CD4-positive, alpha-beta T cell (primary cell): ENCODE measurements at regions of chr11 and their contacts with region 1.

Region 1: GRCh38 chr11:64846998-64847666 is 2.7 kb upstream of the CDC42BPG start:
- DNase-seq: peak; percentile 87 to 98 (median 92)
- ATAC-seq: peak; percentile 62
- H3K4me3 ChIP-seq: no peak overlapping the region
- H3K4me3 Mint-ChIP-seq: peak overlapping the region; percentile 76
- H3K27ac ChIP-seq: no peak overlapping the region
- H3K27ac Mint-ChIP-seq: peak overlapping the region; percentile 85
- H3K4me1 ChIP-seq: peaks cover 77% of the 10 kb centered on the region
- H3K4me1 Mint-ChIP-seq: peaks cover 64% of the 10 kb centered on the region
- H3K27me3 ChIP-seq: no peaks in the 10 kb centered on the region
- H3K27me3 Mint-ChIP-seq: no peaks in the 10 kb centered on the region
- CTCF ChIP-seq: peak; percentile 97

Region 2: GRCh38 chr11:64787526-64788320 is 59.4 kb before region 1 on chr11:
- CTCF ChIA-PET with region 1: interaction called, 5 read pairs
- POLR2A ChIA-PET with region 1: no interaction called
- intact Hi-C with region 1: loop called in 1 of 2 experiments (anchors 5 kb)
- DNase-seq: peak; percentile 44 to 78 (median 58)
- ATAC-seq: peak; percentile 88
- H3K4me3 ChIP-seq: no peak overlapping the region
- H3K4me3 Mint-ChIP-seq: no peak overlapping the region
- H3K27ac ChIP-seq: no peak overlapping the region
- H3K27ac Mint-ChIP-seq: peak overlapping the region; percentile 69
- H3K4me1 ChIP-seq: peaks cover 13% of the 10 kb centered on the region
- H3K4me1 Mint-ChIP-seq: peaks cover 12% of the 10 kb centered on the region
- H3K27me3 ChIP-seq: no peaks in the 10 kb centered on the region
- H3K27me3 Mint-ChIP-seq: no peaks in the 10 kb centered on the region
- CTCF ChIP-seq: peak; percentile 82

Region 3: GRCh38 chr11:64810271-64810890 is 36.8 kb before region 1 on chr11 and contains the start of gene MEN1:
- CTCF ChIA-PET with region 1: interaction called, 10 read pairs
- POLR2A ChIA-PET with region 1: interaction called, 8 read pairs
- intact Hi-C with region 1: loop called in 1 of 2 experiments (anchors 5 kb)
- DNase-seq: peak; percentile 45 to 85 (median 69)
- ATAC-seq: peak; percentile 83
- H3K4me3 ChIP-seq: peak within 1 kb of the TSS; percentile 87
- H3K4me3 Mint-ChIP-seq: peak within 1 kb of the TSS; percentile 99
- H3K27ac ChIP-seq: peak within 1 kb of the TSS; percentile 83 to 88
- H3K27ac Mint-ChIP-seq: peak within 1 kb of the TSS; percentile 85
- H3K4me1 ChIP-seq: peaks cover 17% of the 10 kb centered on the region
- H3K4me1 Mint-ChIP-seq: peaks cover 32% of the 10 kb centered on the region
- H3K27me3 ChIP-seq: no peaks in the 10 kb centered on the region
- H3K27me3 Mint-ChIP-seq: no peaks in the 10 kb centered on the region
- CTCF ChIP-seq: no peak
- total RNA-seq, gene MEN1: 16.4 to 17.7 TPM

Region 4: GRCh38 chr11:64878494-64879243 is 31.5 kb after region 1 on chr11 and contains the start of gene EHD1:
- CTCF ChIA-PET with region 1: interaction called, 21 read pairs
- POLR2A ChIA-PET with region 1: interaction called, 767 read pairs
- intact Hi-C with region 1: no loop called
- DNase-seq: peak; percentile 99 to 100 (median 100)
- ATAC-seq: peak; percentile 81
- H3K4me3 ChIP-seq: peak within 1 kb of the TSS; percentile 100
- H3K4me3 Mint-ChIP-seq: peak within 1 kb of the TSS; percentile 98
- H3K27ac ChIP-seq: peak within 1 kb of the TSS; percentile 95 to 97
- H3K27ac Mint-ChIP-seq: peak within 1 kb of the TSS; percentile 92
- H3K4me1 ChIP-seq: peaks cover 72% of the 10 kb centered on the region
- H3K4me1 Mint-ChIP-seq: peaks cover 62% of the 10 kb centered on the region
- H3K27me3 ChIP-seq: no peaks in the 10 kb centered on the region
- H3K27me3 Mint-ChIP-seq: no peaks in the 10 kb centered on the region
- CTCF ChIP-seq: peak; percentile 58
- total RNA-seq, gene EHD1: 132 to 139 TPM

Region 5: GRCh38 chr11:64894070-64894796 is 47.1 kb after region 1 on chr11:
- CTCF ChIA-PET with region 1: interaction called, 136 read pairs
- POLR2A ChIA-PET with region 1: interaction called, 8 read pairs
- intact Hi-C with region 1: loop called (anchors 1 kb)
- DNase-seq: peak; percentile 86 to 96 (median 91)
- ATAC-seq: peak; percentile 87
- H3K4me3 ChIP-seq: no peak overlapping the region
- H3K4me3 Mint-ChIP-seq: peak overlapping the region; percentile 15
- H3K27ac ChIP-seq: no peak overlapping the region
- H3K27ac Mint-ChIP-seq: peak overlapping the region; percentile 59
- H3K4me1 ChIP-seq: peaks cover 12% of the 10 kb centered on the region
- H3K4me1 Mint-ChIP-seq: no peaks in the 10 kb centered on the region
- H3K27me3 ChIP-seq: no peaks in the 10 kb centered on the region
- H3K27me3 Mint-ChIP-seq: no peaks in the 10 kb centered on the region
- CTCF ChIP-seq: peak; percentile 81

Region 6: GRCh38 chr11:65083834-65084597 is 236.9 kb after region 1 on chr11 and contains the starts of genes CDCA5 and ZFPL1:
- CTCF ChIA-PET with region 1: interaction called, 3 read pairs
- POLR2A ChIA-PET with region 1: no interaction called
- intact Hi-C with region 1: loop called in 1 of 2 experiments (anchors 10 kb)
- DNase-seq: peak; percentile 92 to 98 (median 95)
- ATAC-seq: peak; percentile 87
- H3K4me3 ChIP-seq: peak within 1 kb of the TSS; percentile 80
- H3K4me3 Mint-ChIP-seq: peak within 1 kb of the TSS; percentile 98
- H3K27ac ChIP-seq: peak within 1 kb of the TSS; percentile 86 to 97
- H3K27ac Mint-ChIP-seq: peak within 1 kb of the TSS; percentile 97
- H3K4me1 ChIP-seq: peaks cover 21% of the 10 kb centered on the region
- H3K4me1 Mint-ChIP-seq: peaks cover 33% of the 10 kb centered on the region
- H3K27me3 ChIP-seq: no peaks in the 10 kb centered on the region
- H3K27me3 Mint-ChIP-seq: no peaks in the 10 kb centered on the region
- CTCF ChIP-seq: no peak
- total RNA-seq, gene CDCA5: 0.77 to 0.84 TPM
- total RNA-seq, gene ZFPL1: 46.2 to 47.7 TPM